ENCODE measurements at regions of chr3 and their contacts with region 1.

Region 1: GRCh38 chr3:69288161-69288895 is 97.6 kb downstream of the FRMD4B start:
- DNase-seq: peak; percentile 21
- H3K4me3 ChIP-seq: no peak overlapping the region
- H3K27ac ChIP-seq: peak overlapping the region; percentile 56
- H3K4me1 ChIP-seq: peaks cover 32% of the 10 kb centered on the region
- H3K27me3 ChIP-seq: no peaks in the 10 kb centered on the region
- CTCF ChIP-seq: no peak
- POLR2A ChIP-seq: no peak

Region 2: DNA sequence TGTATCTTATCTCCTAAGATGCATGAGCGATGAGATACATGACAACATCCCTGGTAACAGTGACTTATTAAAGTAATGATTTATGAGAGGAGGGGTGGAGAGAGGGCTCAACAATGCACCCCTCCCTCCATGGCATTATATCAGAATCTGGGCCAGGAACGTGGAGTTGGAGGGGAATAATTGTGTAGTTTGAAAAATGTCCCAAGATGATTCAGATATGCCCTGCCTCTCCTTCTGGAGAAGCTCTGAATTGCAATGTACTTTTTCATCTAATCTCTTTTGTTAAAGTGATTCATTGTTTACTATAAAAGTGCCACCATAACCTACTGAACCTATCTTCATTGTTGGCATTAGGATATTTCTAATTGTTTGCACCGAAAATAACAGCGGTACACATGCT is 11.0 kb after region 1 on chr3:
- CTCF ChIA-PET with region 1: interaction called, 39 read pairs
- POLR2A ChIA-PET with region 1: no interaction called
- dilution Hi-C with region 1: no loop called
- intact Hi-C with region 1: no loop called
- DNase-seq: peak; percentile 9
- H3K4me3 ChIP-seq: no peak overlapping the region
- H3K27ac ChIP-seq: no peak overlapping the region
- H3K4me1 ChIP-seq: peaks cover 16% of the 10 kb centered on the region
- H3K27me3 ChIP-seq: no peaks in the 10 kb centered on the region
- CTCF ChIP-seq: peak; percentile 20 to 23
- POLR2A ChIP-seq: no peak